ENCODE measurements at regions of chr3 and their contacts with region 1.

Region 1: DNA sequence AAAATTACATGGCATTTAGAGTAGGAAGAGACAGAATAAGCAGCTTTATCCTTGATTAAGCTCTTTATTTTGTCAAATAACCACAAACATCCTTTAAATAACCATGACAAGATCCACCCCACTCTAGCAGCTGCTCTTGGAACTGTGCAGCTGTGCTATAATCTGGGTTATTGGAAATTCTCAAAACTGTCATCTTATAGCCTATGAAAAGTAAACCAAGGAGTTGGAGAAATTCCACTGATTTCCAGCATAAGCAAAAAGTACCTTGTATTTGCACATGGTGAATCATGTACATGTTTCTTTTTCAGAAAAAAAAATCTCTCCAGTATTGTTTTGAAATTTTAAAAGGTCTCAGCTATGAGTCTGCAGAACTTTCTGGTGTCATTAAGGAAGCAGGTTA is 88.8 kb upstream of the ABI3BP start:
- DNase-seq: no peak
- ATAC-seq: no peak
- H3K4me3 ChIP-seq: no peak overlapping the region
- H3K27ac ChIP-seq: no peak overlapping the region
- H3K4me1 ChIP-seq: peaks cover 0 to 5% (median 0%) of the 10 kb centered on the region in 12 donors
- H3K27me3 ChIP-seq: no peaks in the 10 kb centered on the region
- CTCF ChIP-seq: no peak
- POLR2A ChIP-seq: no peak

Region 2: GRCh38 chr3:100913870-100914648 is 167.9 kb before region 1 on chr3:
- intact Hi-C with region 1: no loop called
- DNase-seq: no peak
- ATAC-seq: peak; percentile 16 to 80 (median 52)
- H3K4me3 ChIP-seq: no peak overlapping the region
- H3K27ac ChIP-seq: peak overlapping the region in 1 of 12 donors; percentile 13
- H3K4me1 ChIP-seq: peaks cover 0 to 20% (median 0%) of the 10 kb centered on the region in 12 donors
- H3K27me3 ChIP-seq: no peaks in the 10 kb centered on the region
- CTCF ChIP-seq: no peak
- POLR2A ChIP-seq: no peak

Region 3: GRCh38 chr3:101146946-101147345 is 64.9 kb after region 1 on chr3:
- intact Hi-C with region 1: loop called in 1 of 10 experiments (anchors 10 kb)
- DNase-seq: no peak
- ATAC-seq: no peak
- H3K4me3 ChIP-seq: no peak overlapping the region
- H3K27ac ChIP-seq: no peak overlapping the region
- H3K4me1 ChIP-seq: peaks cover 0 to 4% (median 0%) of the 10 kb centered on the region in 12 donors
- H3K27me3 ChIP-seq: no peaks in the 10 kb centered on the region
- CTCF ChIP-seq: no peak
- POLR2A ChIP-seq: no peak

Region 4: GRCh38 chr3:101155825-101156224 is 73.8 kb after region 1 on chr3:
- intact Hi-C with region 1: loop called in 1 of 10 experiments (anchors 5 kb)
- DNase-seq: peak in 4 of 5 donors; percentile 26 to 60 (median 52)
- ATAC-seq: peak; percentile 98 to 99 (median 98)
- H3K4me3 ChIP-seq: no peak overlapping the region
- H3K27ac ChIP-seq: peak overlapping the region in 4 of 12 donors; percentile 6 to 46 (median 24)
- H3K4me1 ChIP-seq: peaks cover 0 to 15% (median 0%) of the 10 kb centered on the region in 12 donors
- H3K27me3 ChIP-seq: no peaks in the 10 kb centered on the region
- CTCF ChIP-seq: no peak
- POLR2A ChIP-seq: no peak

Region 5: DNA sequence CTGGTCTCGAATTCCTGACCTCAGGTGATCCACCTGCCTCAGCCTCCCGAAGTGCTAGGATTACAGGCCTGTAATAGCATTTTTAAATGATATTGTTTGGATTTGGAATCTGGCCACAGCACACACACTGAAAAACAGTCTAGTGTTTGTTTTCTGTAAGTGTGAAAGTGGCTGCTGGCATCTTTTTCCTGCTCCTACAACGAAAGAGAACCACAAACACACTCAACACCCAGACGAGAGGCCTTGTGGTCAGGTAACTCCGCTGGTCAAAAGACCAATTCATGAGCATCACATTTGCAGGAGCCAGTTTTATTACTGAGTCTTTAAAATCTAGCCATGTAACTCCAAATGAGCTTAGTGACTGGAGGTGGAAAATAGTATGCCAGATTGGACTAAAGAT is 188.2 kb after region 1 on chr3:
- intact Hi-C with region 1: no loop called
- DNase-seq: no peak
- ATAC-seq: no peak
- H3K4me3 ChIP-seq: no peak overlapping the region
- H3K27ac ChIP-seq: no peak overlapping the region
- H3K4me1 ChIP-seq: peaks cover 0 to 9% (median 0%) of the 10 kb centered on the region in 12 donors
- H3K27me3 ChIP-seq: no peaks in the 10 kb centered on the region
- CTCF ChIP-seq: no peak
- POLR2A ChIP-seq: no peak